CD4-positive, alpha-beta memory T cell (primary cell): ENCODE measurements at regions of chr6 and their contacts with region 1.

Region 1: DNA sequence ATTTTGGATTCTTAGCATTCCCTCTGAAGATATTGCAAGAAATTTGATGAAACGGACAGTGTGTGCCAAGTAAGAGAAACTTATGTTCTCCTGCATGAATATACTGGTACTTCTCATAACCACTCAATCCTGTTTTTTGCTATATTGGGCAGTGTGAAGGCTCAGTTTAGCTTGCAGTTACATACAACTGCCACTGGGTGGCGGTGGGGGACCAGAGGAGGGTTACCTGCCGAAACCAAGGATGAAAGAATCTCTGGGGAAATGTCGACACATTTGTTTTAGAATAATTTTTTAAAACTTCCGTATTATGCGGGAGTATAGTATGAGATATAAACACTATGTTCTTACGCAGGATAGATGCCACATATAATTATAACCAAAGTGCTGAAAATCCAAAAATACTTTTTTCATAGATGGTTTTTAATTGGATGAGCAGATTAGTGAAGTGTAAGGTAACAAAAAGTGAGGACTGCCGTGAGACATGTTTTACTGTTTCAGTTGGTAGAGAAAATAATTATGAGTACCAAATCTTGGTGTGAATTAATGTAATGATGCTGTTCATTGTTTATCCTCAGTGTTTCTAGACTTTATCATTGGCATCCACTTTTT is 9.7 kb downstream of the TRMT11 start:
- DNase-seq: peak; percentile 56 to 73 (median 68)
- H3K4me3 ChIP-seq: no peak overlapping the region
- H3K4me3 Mint-ChIP-seq: peak overlapping the region; percentile 51 to 90 (median 83)
- H3K27ac ChIP-seq: no peak overlapping the region
- H3K27ac Mint-ChIP-seq: peak overlapping the region; percentile 0 to 68 (median 50)
- H3K4me1 ChIP-seq: no peaks in the 10 kb centered on the region
- H3K4me1 Mint-ChIP-seq: peaks cover 22 to 37% (median 25%) of the 10 kb centered on the region in 4 donors
- H3K27me3 ChIP-seq: no peaks in the 10 kb centered on the region
- H3K27me3 Mint-ChIP-seq: no peaks in the 10 kb centered on the region

Region 2: GRCh38 chr6:126015863-126016262 is 19.8 kb after region 1 on chr6:
- CTCF ChIA-PET with region 1: interaction called, 18 read pairs
- POLR2A ChIA-PET with region 1: no interaction called
- intact Hi-C with region 1: no loop called
- DNase-seq: no peak
- H3K4me3 ChIP-seq: no peak overlapping the region
- H3K4me3 Mint-ChIP-seq: no peak overlapping the region
- H3K27ac ChIP-seq: no peak overlapping the region
- H3K27ac Mint-ChIP-seq: peak overlapping the region in 1 of 7 donors; percentile 28
- H3K4me1 ChIP-seq: no peaks in the 10 kb centered on the region
- H3K4me1 Mint-ChIP-seq: no peaks in the 10 kb centered on the region
- H3K27me3 ChIP-seq: no peaks in the 10 kb centered on the region
- H3K27me3 Mint-ChIP-seq: no peaks in the 10 kb centered on the region

Region 3: GRCh38 chr6:126170978-126171382 is 174.9 kb after region 1 on chr6:
- CTCF ChIA-PET with region 1: no interaction called
- POLR2A ChIA-PET with region 1: no interaction called
- intact Hi-C with region 1: loop called (anchors 1 kb)
- DNase-seq: peak in 4 of 5 donors; percentile 2 to 19 (median 7)
- H3K4me3 ChIP-seq: no peak overlapping the region
- H3K4me3 Mint-ChIP-seq: peak overlapping the region in 6 of 8 donors; percentile 0 to 69 (median 6)
- H3K27ac ChIP-seq: no peak overlapping the region
- H3K27ac Mint-ChIP-seq: peak overlapping the region in 1 of 7 donors; percentile 1
- H3K4me1 ChIP-seq: no peaks in the 10 kb centered on the region
- H3K4me1 Mint-ChIP-seq: peaks cover 0 to 6% (median 5%) of the 10 kb centered on the region in 4 donors
- H3K27me3 ChIP-seq: no peaks in the 10 kb centered on the region
- H3K27me3 Mint-ChIP-seq: no peaks in the 10 kb centered on the region

Region 4: GRCh38 chr6:127539272-127539671 is 1543.2 kb after region 1 on chr6:
- CTCF ChIA-PET with region 1: interaction called, 4 read pairs
- POLR2A ChIA-PET with region 1: no interaction called
- intact Hi-C with region 1: loop called (anchors 1 kb)
- DNase-seq: peak in 4 of 5 donors; percentile 15 to 36 (median 22)
- H3K4me3 ChIP-seq: no peak overlapping the region
- H3K4me3 Mint-ChIP-seq: no peak overlapping the region
- H3K27ac ChIP-seq: no peak overlapping the region
- H3K27ac Mint-ChIP-seq: no peak overlapping the region
- H3K4me1 ChIP-seq: no peaks in the 10 kb centered on the region
- H3K4me1 Mint-ChIP-seq: no peaks in the 10 kb centered on the region
- H3K27me3 ChIP-seq: no peaks in the 10 kb centered on the region
- H3K27me3 Mint-ChIP-seq: peaks cover 7 to 13% of the 10 kb centered on the region in 2 donors